Activated T-helper 2 cell treated with anti-CD3 and anti-CD28 coated beads, Interferon-gamma antibody, Interleukin-2, Interleukin-4, amounts not matched to agents 10 μg/mL and 5 μg/mL and 100 μg/mL, durations not matched to agents 14 hours and 24 hours and 36 hours (primary cell): ENCODE measurements at regions of chr19 and their contacts with region 1.

Region 1: GRCh38 chr19:32971715-32972540 is at the starts of genes CEP89 and FAAP24:
- DNase-seq: peak; percentile 99
- H3K4me3 Mint-ChIP-seq: peak within 1 kb of the TSS; percentile 98
- H3K27ac Mint-ChIP-seq: peak within 1 kb of the TSS; percentile 94
- H3K4me1 Mint-ChIP-seq: peaks cover 8% of the 10 kb centered on the region
- H3K27me3 Mint-ChIP-seq: no peaks in the 10 kb centered on the region
- total RNA-seq, gene CEP89: 17.3 and 18.0 TPM in 2 replicates
- total RNA-seq, gene FAAP24: 9.8 and 10.7 TPM in 2 replicates

Region 2: GRCh38 chr19:32674959-32675719 is 296.8 kb before region 1 on chr19 and contains the start of gene ANKRD27:
- intact Hi-C with region 1: loop called (anchors 1 kb)
- DNase-seq: peak; percentile 96
- H3K4me3 Mint-ChIP-seq: peak within 1 kb of the TSS; percentile 95
- H3K27ac Mint-ChIP-seq: peak within 1 kb of the TSS; percentile 84
- H3K4me1 Mint-ChIP-seq: peaks cover 26% of the 10 kb centered on the region
- H3K27me3 Mint-ChIP-seq: peaks cover 15% of the 10 kb centered on the region
- total RNA-seq, gene ANKRD27: 35.6 and 38.3 TPM in 2 replicates

Region 3: DNA sequence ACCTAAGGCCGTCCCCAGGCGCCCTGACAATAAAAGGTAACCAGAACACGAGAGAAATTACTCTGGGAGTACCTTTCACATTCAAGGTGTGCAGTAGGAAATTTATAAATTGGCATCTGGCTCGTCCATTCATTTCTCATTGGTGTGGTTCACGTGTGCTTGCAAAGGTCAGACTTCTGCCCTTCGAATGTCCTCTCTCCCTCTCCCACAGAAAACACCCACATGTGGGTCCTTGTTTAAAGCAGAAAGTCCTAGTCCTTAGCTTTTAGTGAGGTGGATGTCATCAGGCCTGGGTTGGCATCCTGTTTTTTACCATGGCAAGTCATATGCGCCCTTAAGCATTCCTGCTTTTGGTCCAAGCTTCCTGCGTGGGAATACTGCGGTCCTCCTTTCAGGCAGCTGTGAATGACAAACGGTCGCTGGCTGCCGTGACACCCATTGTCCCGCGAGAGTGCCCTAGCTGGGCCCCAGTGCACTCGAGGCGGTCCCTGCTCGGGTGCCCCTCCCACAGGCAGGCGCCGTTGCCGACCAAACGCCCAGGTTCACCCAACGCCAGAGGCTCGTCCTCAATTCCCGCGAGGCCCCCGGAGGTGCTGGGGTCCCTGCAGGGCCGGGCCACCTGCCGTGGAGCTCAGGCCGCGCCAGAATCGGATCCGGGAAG is 280.5 kb before region 1 on chr19 and contains the start of gene NUDT19:
- intact Hi-C with region 1: loop called (anchors 5 kb)
- DNase-seq: peak; percentile 78
- H3K4me3 Mint-ChIP-seq: peak within 1 kb of the TSS; percentile 95
- H3K27ac Mint-ChIP-seq: peak within 1 kb of the TSS; percentile 94
- H3K4me1 Mint-ChIP-seq: peaks cover 42% of the 10 kb centered on the region
- H3K27me3 Mint-ChIP-seq: no peaks in the 10 kb centered on the region
- total RNA-seq, gene NUDT19: 25.0 and 25.6 TPM in 2 replicates

Region 4: DNA sequence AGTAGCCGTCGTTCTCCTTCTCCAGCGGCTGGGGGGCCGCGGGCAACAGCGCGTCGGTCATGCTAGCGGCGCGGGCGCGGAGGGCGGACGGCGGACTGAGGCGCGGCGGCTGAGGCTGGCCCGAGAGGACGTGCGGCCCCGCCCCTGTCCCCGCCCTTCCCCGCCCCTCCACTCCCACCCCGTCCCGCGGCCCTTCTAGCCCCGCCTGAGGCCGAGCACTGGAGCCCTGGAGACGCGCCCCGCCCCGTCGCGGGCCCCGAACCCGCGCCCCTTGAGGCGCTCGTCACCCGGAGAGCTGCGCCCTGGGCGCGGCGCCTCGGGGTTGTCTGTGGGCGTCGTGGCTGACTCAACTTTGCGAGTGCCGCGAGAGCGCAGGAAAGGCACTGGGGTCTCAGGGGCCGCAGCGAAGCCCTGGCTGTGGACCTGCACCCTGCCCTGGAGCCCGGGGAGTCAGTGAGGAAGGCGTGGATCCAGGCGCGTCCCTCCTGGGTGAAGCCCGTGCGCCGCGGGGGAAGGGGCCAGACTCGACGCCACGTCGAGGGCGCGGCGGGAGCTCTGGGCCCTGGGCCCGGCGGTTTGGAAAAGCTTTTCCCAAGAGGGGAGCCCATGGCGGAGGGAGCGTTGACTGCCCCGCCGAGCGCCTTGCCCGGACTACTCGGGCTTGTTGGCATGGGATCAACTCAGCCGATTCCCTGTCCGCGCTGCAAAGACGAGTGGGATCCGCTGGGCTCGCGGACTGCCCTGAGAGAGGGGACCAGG is 93.0 kb after region 1 on chr19 and contains the start of gene RHPN2:
- intact Hi-C with region 1: loop called (anchors 5 kb)
- DNase-seq: peak; percentile 43
- H3K4me3 Mint-ChIP-seq: peak within 1 kb of the TSS; percentile 67
- H3K27ac Mint-ChIP-seq: no peak within 1 kb of the TSS
- H3K4me1 Mint-ChIP-seq: no peaks in the 10 kb centered on the region
- H3K27me3 Mint-ChIP-seq: peaks cover 24% of the 10 kb centered on the region
- total RNA-seq, gene RHPN2: 3.5 and 5.0 TPM in 2 replicates

Region 5: DNA sequence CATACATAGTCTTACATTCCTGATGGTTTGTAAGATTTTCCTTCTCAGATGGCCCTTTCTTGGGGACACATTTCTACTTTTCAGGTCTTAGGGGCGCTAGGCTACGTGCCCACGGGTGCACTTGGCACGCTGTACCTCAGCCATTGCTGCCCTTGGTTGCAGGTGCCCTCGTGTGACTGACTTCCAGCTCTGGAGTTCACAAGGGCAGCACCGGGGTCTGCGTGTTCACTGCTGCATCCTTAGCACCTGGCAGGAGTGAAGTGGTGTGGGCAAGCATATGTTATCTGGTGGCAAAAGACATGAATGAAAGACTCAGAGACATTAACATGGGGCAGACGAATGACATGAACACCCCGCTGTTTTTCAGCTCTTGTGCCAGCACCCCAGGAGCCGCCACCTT is 146.7 kb after region 1 on chr19:
- intact Hi-C with region 1: loop called (anchors 1 kb)
- DNase-seq: no peak
- H3K4me3 Mint-ChIP-seq: no peak overlapping the region
- H3K27ac Mint-ChIP-seq: no peak overlapping the region
- H3K4me1 Mint-ChIP-seq: no peaks in the 10 kb centered on the region
- H3K27me3 Mint-ChIP-seq: no peaks in the 10 kb centered on the region